Right ventricle myocardium inferior (tissue), 1 donor: ENCODE measurements at regions of chr1 and their contacts with region 1.

Region 1: GRCh38 chr1:154974063-154974807 is at the start of gene CKS1B:
- DNase-seq: peak; percentile 98
- ATAC-seq: peak; percentile 89
- total RNA-seq, gene CKS1B: 22.2 TPM

Region 2: DNA sequence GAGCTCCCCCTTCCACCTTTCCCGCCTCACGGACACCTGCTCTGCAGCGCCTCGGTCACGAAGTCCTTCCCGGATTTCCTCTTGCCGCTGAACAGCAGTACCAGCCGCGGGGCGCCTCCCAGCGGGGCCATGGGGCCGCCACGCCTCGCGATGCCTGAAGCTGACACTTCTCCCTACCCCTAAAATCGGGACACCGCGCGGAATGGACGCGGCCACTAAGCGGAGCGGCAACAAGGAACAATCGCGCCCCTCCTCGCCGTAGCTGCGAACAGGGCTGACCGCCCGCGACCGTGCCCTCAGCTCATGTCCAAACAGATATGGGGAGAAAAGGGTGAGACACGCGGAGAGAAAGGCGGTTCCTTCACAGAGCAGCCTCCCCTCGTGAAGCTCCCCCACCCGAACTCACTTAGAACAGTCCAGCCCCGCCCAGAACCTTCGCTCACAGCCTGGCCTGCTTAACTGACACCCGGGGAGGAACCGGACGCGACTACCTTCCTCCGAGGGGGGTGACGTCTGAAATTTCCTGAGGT is 37.6 kb before region 1 on chr1 and contains the start of gene PMVK:
- intact Hi-C with region 1: loop called (anchors 2 kb)
- DNase-seq: peak; percentile 97
- ATAC-seq: peak; percentile 96
- total RNA-seq, gene PMVK: 71.1 TPM

Region 3: GRCh38 chr1:155017041-155017945 is 43.1 kb after region 1 on chr1:
- intact Hi-C with region 1: loop called (anchors 5 kb)
- DNase-seq: peak; percentile 95
- ATAC-seq: peak; percentile 93

Region 4: DNA sequence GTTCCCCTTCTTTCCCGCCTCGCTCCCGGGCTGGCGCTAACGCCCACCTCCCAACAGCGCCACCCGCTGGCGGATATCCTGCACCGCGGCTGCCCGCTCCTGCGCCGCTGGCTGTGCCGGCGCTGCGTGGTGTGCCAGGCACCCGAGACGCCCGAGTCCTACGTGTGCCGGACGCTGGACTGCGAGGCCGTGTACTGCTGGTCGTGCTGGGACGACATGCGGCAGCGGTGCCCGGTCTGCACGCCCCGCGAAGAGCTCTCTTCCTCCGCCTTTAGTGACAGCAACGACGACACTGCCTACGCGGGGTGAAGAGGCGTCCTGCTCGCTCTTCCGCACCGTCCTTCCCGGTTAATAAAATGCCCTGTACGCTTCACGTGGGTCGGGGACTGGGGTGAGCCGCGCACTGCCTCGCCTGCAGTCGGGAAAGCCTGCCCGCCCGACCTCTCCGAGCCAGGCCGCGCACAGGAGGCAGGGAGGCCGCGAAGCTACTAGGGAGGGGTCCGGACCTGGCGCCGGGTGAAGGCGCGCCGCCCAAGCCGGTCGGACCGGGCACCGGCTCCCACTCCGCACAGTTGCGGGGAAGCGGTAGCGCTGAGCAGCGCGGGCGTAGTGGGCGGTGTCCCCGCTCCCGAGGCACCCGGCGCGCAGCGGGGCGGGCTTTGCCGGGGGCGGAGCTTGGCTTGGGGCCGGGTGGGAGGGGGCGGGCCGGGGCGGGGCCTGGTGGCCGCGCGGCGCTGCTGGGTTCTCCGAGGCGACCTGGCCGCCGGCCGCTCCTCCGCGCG is 76.5 kb after region 1 on chr1 and contains the start of gene ADAM15:
- intact Hi-C with region 1: loop called (anchors 2 kb)
- DNase-seq: peak; percentile 93
- ATAC-seq: peak; percentile 89
- total RNA-seq, gene ADAM15: 101 TPM